K562 (cell line): ENCODE measurements at regions of chr7 and their contacts with region 1.

Region 1: DNA sequence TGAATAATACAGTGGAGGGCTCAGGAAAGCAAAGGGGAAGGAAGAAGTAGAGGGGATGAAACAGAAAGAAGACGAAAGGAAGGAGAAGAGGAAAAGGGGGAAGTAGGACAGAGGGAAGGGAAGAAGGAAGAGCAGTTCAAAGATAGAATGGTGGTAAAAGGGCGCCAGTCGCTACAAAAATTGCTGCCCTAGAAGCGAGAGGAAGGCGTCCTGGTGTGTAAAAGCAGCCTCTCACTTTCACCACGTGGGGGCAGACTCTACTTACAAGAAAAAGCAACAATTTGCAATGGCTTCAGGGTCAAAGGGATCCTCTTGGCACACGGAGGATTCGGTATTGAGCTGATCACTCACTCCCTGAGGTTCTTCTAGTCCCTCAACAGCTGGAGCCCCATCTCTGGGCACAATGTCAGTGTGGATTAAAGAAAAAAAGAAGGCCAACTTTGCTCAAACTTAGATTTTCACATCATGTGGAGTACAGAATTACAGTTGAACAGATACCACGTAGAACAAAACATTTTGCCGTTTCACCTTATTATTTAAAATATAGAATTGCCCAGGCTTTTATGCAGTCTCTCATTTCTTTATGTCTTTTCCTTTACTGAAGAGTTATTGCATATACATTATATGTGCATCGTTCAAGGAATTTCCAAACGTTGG is 31.4 kb upstream of the NPVF start:
- DNase-seq: peak; percentile 49 to 77 (median 56)
- ATAC-seq: peak; percentile 97
- H3K4me3 ChIP-seq: no peak overlapping the region
- H3K27ac ChIP-seq: no peak overlapping the region
- H3K4me1 ChIP-seq: no peaks in the 10 kb centered on the region; a peak in 1 of 5 replicates
- H3K27me3 ChIP-seq: peaks cover 0 to 8% of the 10 kb centered on the region in 2 experiments; a peak in 3 of 5 replicates
- CTCF ChIP-seq: peak; percentile 81 to 90 (median 88)
- EP300 ChIP-seq: no peak
- POLR2A ChIP-seq: no peak
- RAD21 ChIP-seq: peak; percentile 92

Region 2: DNA sequence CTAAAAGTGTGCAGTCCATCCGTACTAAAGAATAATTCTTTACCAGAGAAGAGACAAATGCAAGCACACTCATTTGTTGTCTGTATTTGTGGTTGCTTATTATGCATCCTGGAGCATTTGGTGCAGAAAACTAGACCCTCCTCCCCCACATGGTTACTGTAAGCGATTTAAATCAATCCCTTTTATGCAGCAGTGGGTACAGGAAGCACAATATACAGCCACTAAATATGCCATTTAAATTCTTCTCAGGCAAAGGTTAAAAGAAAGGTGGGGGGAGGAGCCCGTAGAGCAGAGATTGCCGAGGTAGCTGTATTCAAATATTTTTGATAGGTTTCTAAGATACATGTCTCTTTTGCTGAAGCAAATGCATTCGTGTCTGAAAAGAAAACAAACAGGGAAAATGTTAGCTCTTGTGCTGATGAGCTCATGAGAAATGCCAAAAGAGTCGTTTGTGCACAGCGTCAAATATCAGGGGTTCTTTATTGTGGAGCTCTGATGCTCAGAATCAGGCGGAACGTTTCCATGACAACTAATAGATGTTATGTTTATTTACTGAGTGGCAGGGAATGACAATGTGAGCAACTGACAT is 99.8 kb after region 1 on chr7:
- CTCF ChIA-PET with region 1: no interaction called
- POLR2A ChIA-PET with region 1: no interaction called
- in situ Hi-C with region 1: no loop called
- intact Hi-C with region 1: no loop called
- DNase-seq: no peak
- ATAC-seq: no peak
- H3K4me3 ChIP-seq: no peak overlapping the region
- H3K27ac ChIP-seq: no peak overlapping the region
- H3K4me1 ChIP-seq: no peaks in the 10 kb centered on the region
- H3K27me3 ChIP-seq: no peaks in the 10 kb centered on the region; a peak in 2 of 5 replicates
- CTCF ChIP-seq: no peak
- EP300 ChIP-seq: no peak
- POLR2A ChIP-seq: no peak
- RAD21 ChIP-seq: no peak

Region 3: GRCh38 chr7:25389489-25390106 is 129.9 kb after region 1 on chr7:
- CTCF ChIA-PET with region 1: interaction called, 29 read pairs
- POLR2A ChIA-PET with region 1: no interaction called
- in situ Hi-C with region 1: loop called (anchors 5 kb)
- intact Hi-C with region 1: loop called (anchors 1 kb)
- DNase-seq: peak; percentile 24 to 31 (median 25)
- ATAC-seq: 0 out of 3 replicates have a peak, but pooled peaks have one; percentile 42
- H3K4me3 ChIP-seq: no peak overlapping the region
- H3K27ac ChIP-seq: no peak overlapping the region
- H3K4me1 ChIP-seq: no peaks in the 10 kb centered on the region
- H3K27me3 ChIP-seq: peaks cover 7 to 17% of the 10 kb centered on the region in 2 experiments
- CTCF ChIP-seq: peak in 2 of 3 experiments; percentile 40 to 67; a peak in 4 of 6 replicates
- EP300 ChIP-seq: no peak
- POLR2A ChIP-seq: no peak
- RAD21 ChIP-seq: peak; percentile 65 to 74

Region 4: DNA sequence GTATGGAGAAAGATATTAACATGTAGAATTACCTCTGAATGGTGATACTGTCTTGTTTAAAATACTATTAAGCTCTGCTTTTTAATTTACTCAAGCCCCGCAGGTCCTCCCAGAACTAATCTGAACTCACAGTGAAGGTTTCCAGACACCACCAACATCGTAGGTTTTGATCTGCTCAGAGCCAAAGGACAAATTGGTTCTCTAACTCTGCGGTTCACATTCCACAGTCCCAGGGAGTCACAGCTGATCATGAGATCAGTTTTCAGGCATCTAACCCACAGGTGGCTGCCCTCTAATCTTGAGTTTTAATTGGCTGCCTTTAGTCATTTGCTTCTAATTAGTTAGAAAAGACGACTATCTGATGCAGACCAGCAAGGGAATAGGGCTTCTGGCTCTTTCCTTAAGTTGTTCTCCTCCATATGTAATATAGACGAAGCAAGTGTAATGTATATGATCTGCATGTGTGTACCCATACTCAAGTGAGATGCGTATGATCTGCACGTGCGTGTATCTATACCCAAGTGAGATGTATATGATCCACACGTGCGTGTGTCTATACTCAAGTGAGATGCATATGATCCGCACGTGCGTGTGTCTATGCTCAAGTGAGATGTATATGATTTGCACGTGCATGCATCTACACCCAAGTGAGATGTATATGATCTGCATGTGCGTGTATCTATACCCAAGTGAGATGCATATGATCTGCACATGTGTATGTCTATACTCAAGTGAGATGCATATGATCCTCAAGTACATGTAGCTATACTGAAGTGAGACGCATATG is 300.1 kb after region 1 on chr7:
- CTCF ChIA-PET with region 1: interaction called, 44 read pairs
- POLR2A ChIA-PET with region 1: no interaction called
- in situ Hi-C with region 1: loop called (anchors 5 kb)
- intact Hi-C with region 1: no loop called
- DNase-seq: no peak
- ATAC-seq: no peak
- H3K4me3 ChIP-seq: no peak overlapping the region
- H3K27ac ChIP-seq: no peak overlapping the region
- H3K4me1 ChIP-seq: no peaks in the 10 kb centered on the region
- H3K27me3 ChIP-seq: peaks cover 16 to 50% of the 10 kb centered on the region in 2 experiments; a peak in 4 of 5 replicates
- CTCF ChIP-seq: no peak
- EP300 ChIP-seq: no peak
- POLR2A ChIP-seq: no peak
- RAD21 ChIP-seq: no peak

Region 5: GRCh38 chr7:25565949-25566348 is 306.2 kb after region 1 on chr7:
- CTCF ChIA-PET with region 1: interaction called, 44 read pairs
- POLR2A ChIA-PET with region 1: no interaction called
- in situ Hi-C with region 1: loop called (anchors 5 kb)
- intact Hi-C with region 1: loop called (anchors 1 kb)
- DNase-seq: peak; percentile 46 to 72 (median 64)
- ATAC-seq: no peak
- H3K4me3 ChIP-seq: no peak overlapping the region
- H3K27ac ChIP-seq: no peak overlapping the region
- H3K4me1 ChIP-seq: peaks cover 0 to 4% of the 10 kb centered on the region in 2 experiments; a peak in 1 of 5 replicates
- H3K27me3 ChIP-seq: peaks cover 4 to 38% of the 10 kb centered on the region in 2 experiments; a peak in 4 of 5 replicates
- CTCF ChIP-seq: peak; percentile 98 to 100 (median 100)
- EP300 ChIP-seq: no peak
- POLR2A ChIP-seq: no peak
- RAD21 ChIP-seq: peak; percentile 99